ENCODE measurements at regions of chr2 and their contacts with region 1.

Region 1: GRCh38 chr2:29977284-29977683 is 55.9 kb upstream of the ALK start:
- DNase-seq: no peak
- H3K4me3 ChIP-seq: no peak overlapping the region
- H3K27ac ChIP-seq: no peak overlapping the region
- H3K4me1 ChIP-seq: no peaks in the 10 kb centered on the region
- H3K27me3 ChIP-seq: no peaks in the 10 kb centered on the region
- CTCF ChIP-seq: no peak
- POLR2A ChIP-seq: no peak

Region 2: GRCh38 chr2:29182931-29183330 is 794.4 kb before region 1 on chr2:
- intact Hi-C with region 1: loop called (anchors 5 kb)
- DNase-seq: no peak
- H3K4me3 ChIP-seq: no peak overlapping the region
- H3K27ac ChIP-seq: no peak overlapping the region
- H3K4me1 ChIP-seq: no peaks in the 10 kb centered on the region
- H3K27me3 ChIP-seq: no peaks in the 10 kb centered on the region
- CTCF ChIP-seq: no peak
- POLR2A ChIP-seq: no peak

Region 3: DNA sequence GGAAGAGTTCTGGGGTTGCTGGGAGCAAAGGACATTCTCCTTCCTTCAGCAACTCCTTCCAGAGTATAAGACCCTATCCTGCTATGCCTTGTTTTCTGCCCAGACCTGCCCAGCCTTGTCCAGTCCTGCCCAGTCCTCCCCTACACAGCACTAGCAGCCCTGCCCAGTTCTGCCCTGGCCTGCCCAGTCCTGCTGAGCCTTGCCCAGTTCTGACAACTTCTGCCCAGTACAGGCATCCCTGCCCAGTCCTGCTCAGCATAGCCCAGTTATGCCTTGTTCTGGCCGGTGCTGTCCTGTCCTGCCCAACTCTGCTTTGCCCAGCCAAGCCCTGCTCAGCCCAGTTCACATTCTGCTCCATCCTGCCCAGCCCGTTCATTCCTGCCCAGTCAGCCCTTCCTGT is 11.0 kb before region 1 on chr2:
- intact Hi-C with region 1: no loop called
- DNase-seq: no peak
- H3K4me3 ChIP-seq: no peak overlapping the region
- H3K27ac ChIP-seq: no peak overlapping the region
- H3K4me1 ChIP-seq: no peaks in the 10 kb centered on the region
- H3K27me3 ChIP-seq: no peaks in the 10 kb centered on the region
- CTCF ChIP-seq: no peak
- POLR2A ChIP-seq: no peak

Region 4: DNA sequence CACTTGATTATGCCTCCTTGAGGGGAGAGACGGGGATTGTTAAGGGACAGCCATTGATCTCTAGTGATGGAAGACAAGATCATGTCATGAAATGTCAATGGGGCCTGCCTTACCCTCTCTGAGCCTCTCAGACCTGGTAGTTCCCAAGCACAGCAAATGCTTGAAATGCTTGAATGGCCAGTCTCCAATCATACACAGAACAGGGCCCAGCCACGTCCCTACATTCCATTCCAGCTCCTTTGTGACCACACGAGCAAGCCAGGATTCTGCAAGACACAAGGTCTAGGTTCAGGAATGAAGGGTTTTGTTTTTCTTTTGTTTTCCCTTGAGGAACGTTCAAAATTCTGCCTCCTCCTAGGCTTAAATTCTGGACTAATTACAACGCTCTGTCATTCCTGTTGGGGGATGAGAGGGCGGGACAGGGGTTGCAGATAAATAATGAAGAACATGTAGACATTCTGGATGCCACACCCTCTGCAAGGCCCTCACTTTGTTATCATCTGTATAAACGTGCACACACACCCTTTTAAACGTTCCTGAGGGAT is 71.4 kb after region 1 on chr2:
- intact Hi-C with region 1: no loop called
- DNase-seq: no peak
- H3K4me3 ChIP-seq: no peak overlapping the region
- H3K27ac ChIP-seq: no peak overlapping the region
- H3K4me1 ChIP-seq: no peaks in the 10 kb centered on the region
- H3K27me3 ChIP-seq: no peaks in the 10 kb centered on the region
- CTCF ChIP-seq: no peak
- POLR2A ChIP-seq: no peak

Region 5: GRCh38 chr2:30662268-30663131 is 685.2 kb after region 1 on chr2:
- intact Hi-C with region 1: no loop called
- DNase-seq: no peak
- H3K4me3 ChIP-seq: no peak overlapping the region
- H3K27ac ChIP-seq: no peak overlapping the region
- H3K4me1 ChIP-seq: no peaks in the 10 kb centered on the region
- H3K27me3 ChIP-seq: no peaks in the 10 kb centered on the region
- CTCF ChIP-seq: no peak
- POLR2A ChIP-seq: no peak